BJ (cell line): ENCODE measurements at regions of chr3 and their contacts with region 1.

Region 1: GRCh38 chr3:168865022-168865551 is 769.4 kb upstream of the GOLIM4 start:
- DNase-seq: no peak
- H3K4me3 ChIP-seq: no peak overlapping the region
- H3K27me3 ChIP-seq: peaks cover 2% of the 10 kb centered on the region
- CTCF ChIP-seq: peak; percentile 80

Region 2: GRCh38 chr3:168876346-168877035 is 11.4 kb after region 1 on chr3:
- CTCF ChIA-PET with region 1: interaction called, 16 read pairs
- POLR2A ChIA-PET with region 1: no interaction called
- DNase-seq: no peak
- H3K4me3 ChIP-seq: no peak overlapping the region
- H3K27me3 ChIP-seq: no peaks in the 10 kb centered on the region
- CTCF ChIP-seq: no peak

Region 3: GRCh38 chr3:168977716-168978374 is 112.8 kb after region 1 on chr3:
- CTCF ChIA-PET with region 1: no interaction called
- POLR2A ChIA-PET with region 1: no interaction called
- DNase-seq: no peak
- H3K4me3 ChIP-seq: no peak overlapping the region
- H3K27me3 ChIP-seq: no peaks in the 10 kb centered on the region
- CTCF ChIP-seq: no peak

Region 4: GRCh38 chr3:169022457-169022856 is 157.4 kb after region 1 on chr3:
- CTCF ChIA-PET with region 1: no interaction called
- POLR2A ChIA-PET with region 1: no interaction called
- DNase-seq: no peak
- H3K4me3 ChIP-seq: no peak overlapping the region
- H3K27me3 ChIP-seq: no peaks in the 10 kb centered on the region; the same call in 1 of the 2 replicates
- CTCF ChIP-seq: no peak